Activated CD8-positive, alpha-beta T cell treated with anti-CD3 and anti-CD28 coated beads for 36 hours (primary cell): ENCODE measurements at regions of chr1 and their contacts with region 1.

Region 1: DNA sequence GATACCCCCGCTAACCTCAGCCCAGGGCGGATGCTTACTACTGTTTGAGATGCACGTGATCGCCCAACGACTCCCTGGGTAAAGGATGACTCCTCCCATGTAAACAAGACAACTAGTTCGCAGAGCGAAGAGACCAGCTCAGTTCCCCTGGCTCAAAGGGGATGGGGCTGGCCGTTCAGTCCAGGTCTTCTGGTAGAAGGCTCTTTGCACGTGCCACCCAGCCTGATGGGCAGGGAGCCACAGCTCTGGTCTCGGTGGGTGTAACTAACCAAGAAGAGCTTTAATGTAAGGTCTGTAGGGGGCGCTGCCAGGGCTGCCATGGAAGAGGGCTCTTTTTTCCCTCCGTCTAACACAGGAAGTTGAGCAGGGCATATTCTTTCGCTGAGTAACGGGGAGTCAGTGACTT is 49.4 kb upstream of the PARP1 start:
- DNase-seq: peak; percentile 80
- ATAC-seq: peak; percentile 92
- H3K4me3 Mint-ChIP-seq: peak overlapping the region; percentile 67
- H3K27ac Mint-ChIP-seq: peak overlapping the region; percentile 84
- H3K4me1 Mint-ChIP-seq: peaks cover 18% of the 10 kb centered on the region
- H3K27me3 Mint-ChIP-seq: no peaks in the 10 kb centered on the region
- CTCF ChIP-seq: peak; percentile 72

Region 2: DNA sequence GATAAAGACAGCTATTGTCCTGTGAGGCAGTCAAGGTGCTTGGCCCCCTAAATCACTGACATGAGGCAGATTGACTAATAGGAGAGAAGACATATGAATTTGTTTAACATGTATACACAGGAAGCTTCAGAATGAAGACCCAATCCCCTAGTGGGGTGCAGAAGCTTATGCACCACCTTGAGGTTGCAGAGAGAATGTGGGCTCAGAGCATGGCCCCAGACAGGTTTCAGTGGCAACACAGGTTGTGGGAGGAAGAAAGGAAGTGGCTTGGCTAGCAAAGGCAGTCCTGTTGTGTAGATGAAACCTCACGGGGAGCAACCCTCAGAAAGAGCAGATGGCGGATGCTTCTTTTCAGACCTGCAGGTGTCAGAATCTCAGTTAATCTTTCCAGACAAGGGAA is 12.4 kb before region 1 on chr1:
- CTCF ChIA-PET with region 1: interaction called, 18 read pairs
- POLR2A ChIA-PET with region 1: no interaction called
- intact Hi-C with region 1: no loop called
- DNase-seq: peak; percentile 86
- ATAC-seq: peak; percentile 99
- H3K4me3 Mint-ChIP-seq: no peak overlapping the region
- H3K27ac Mint-ChIP-seq: peak overlapping the region; percentile 12
- H3K4me1 Mint-ChIP-seq: peaks cover 31% of the 10 kb centered on the region
- H3K27me3 Mint-ChIP-seq: no peaks in the 10 kb centered on the region
- CTCF ChIP-seq: peak; percentile 61